ENCODE measurements at regions of chr17 and their contacts with region 1.

Region 1: DNA sequence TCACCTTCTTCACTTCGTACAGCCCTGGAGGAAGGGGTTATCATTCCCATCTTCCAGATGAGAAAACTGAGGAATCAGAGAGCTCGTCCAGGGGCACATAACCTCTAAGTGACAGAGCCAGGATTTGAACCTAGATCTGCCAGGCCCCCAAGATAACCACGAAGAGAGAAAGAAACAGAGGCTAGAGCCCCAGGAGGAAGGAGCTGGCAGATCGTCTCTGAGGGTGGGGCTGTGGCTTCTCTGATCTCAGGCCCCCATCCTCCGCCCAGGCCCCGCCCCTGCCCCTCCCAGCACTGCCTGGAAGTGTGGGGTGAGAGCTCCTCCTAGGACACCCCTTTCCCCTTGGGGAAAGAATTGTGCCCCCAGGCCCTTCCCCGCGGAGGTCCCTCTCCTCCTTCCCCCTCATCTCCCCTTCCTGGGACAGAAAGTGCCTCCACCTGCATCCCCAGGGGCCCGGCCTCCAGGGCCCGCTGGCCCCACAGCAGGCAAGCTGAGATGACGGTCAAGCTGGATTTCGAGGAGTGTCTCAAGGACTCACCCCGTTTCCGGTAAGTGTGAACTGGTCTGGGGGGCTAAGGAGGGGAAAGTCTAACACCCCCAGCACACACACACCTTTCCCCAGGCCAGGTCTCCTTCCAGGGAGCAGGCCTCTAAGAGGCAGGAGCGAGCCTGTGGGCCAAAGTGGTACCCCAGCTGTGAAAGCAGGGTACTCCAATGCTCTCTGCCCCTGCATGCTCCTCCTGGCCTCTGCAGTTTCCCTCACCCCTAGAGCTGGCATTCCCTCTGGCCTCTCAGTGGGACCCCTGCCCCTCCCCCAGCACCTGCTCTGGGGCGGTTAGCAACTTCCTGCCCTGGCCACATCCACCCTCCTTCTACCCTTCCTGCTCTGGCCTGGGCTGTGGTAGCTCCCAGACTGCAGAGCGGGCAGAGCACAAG is at the start of gene ACAP1:
- DNase-seq: peak; percentile 85
- ATAC-seq: peak; percentile 90
- H3K4me3 Mint-ChIP-seq: peak within 1 kb of the TSS; percentile 97
- H3K27ac Mint-ChIP-seq: peak within 1 kb of the TSS; percentile 96
- H3K4me1 Mint-ChIP-seq: peaks cover 43% of the 10 kb centered on the region
- H3K27me3 Mint-ChIP-seq: no peaks in the 10 kb centered on the region
- total RNA-seq, gene ACAP1: 710 to 756 TPM

Region 2: DNA sequence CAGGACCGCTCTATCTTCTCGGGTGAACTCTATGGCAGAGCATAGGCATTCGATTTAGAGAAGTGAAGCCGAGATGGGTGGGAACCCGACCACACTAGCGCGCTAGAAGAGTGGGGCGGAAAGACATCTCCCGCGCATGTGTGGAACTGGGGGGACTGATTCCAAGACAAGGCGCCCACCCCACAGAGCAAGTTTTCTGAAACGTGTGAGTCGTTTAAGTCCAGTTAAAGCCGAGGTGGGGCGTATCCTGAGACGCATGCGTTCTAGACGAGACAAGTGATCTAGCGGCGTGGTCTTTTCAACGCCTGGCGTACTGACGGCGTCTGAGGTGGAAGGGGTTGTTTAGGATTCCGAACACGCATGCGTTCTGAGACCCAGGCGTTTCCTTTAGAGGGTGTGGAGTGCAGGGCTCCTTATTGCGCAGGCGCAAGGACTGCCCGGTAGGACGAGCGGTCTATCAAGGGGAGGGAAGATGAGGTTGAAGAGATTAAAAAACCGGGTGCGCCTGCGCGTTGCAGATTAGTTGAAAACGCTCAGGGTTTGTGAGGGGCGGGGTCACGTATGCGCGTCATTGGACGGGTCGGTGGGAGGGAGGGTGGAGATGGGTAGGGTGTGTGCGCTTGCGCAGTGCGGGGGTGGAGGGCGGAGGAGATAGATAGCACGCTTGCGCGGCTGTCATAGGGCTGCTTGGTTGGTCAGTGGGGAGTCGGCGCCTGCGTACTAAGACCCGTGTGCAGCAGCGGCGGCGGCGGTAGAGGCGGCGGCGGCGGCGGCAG is 29.4 kb before region 1 on chr17 and contains the start of gene EIF5A:
- POLR2A ChIA-PET with region 1: interaction called, 34 read pairs
- DNase-seq: peak; percentile 99
- ATAC-seq: peak; percentile 81
- H3K4me3 Mint-ChIP-seq: peak within 1 kb of the TSS; percentile 89
- H3K27ac Mint-ChIP-seq: peak within 1 kb of the TSS; percentile 98
- H3K4me1 Mint-ChIP-seq: peaks cover 29% of the 10 kb centered on the region
- H3K27me3 Mint-ChIP-seq: no peaks in the 10 kb centered on the region
- total RNA-seq, gene EIF5A: 420 to 451 TPM

Region 3: GRCh38 chr17:7314719-7315569 is 21.6 kb before region 1 on chr17 and contains the start of gene GPS2:
- POLR2A ChIA-PET with region 1: interaction called, 51 read pairs
- DNase-seq: peak; percentile 97
- ATAC-seq: peak; percentile 86
- H3K4me3 Mint-ChIP-seq: peak within 1 kb of the TSS; percentile 93
- H3K27ac Mint-ChIP-seq: peak within 1 kb of the TSS; percentile 95
- H3K4me1 Mint-ChIP-seq: peaks cover 31% of the 10 kb centered on the region
- H3K27me3 Mint-ChIP-seq: no peaks in the 10 kb centered on the region
- total RNA-seq, gene GPS2: 97.1 to 98.5 TPM

Region 4: GRCh38 chr17:7323731-7324437 is 12.6 kb before region 1 on chr17:
- POLR2A ChIA-PET with region 1: interaction called, 33 read pairs
- DNase-seq: peak; percentile 82
- ATAC-seq: peak; percentile 55
- H3K4me3 Mint-ChIP-seq: no peak overlapping the region
- H3K27ac Mint-ChIP-seq: peak overlapping the region; percentile 21
- H3K4me1 Mint-ChIP-seq: peaks cover 13% of the 10 kb centered on the region
- H3K27me3 Mint-ChIP-seq: no peaks in the 10 kb centered on the region

Region 5: GRCh38 chr17:7416323-7416722 is 79.8 kb after region 1 on chr17:
- POLR2A ChIA-PET with region 1: no interaction called
- DNase-seq: no peak
- ATAC-seq: no peak
- H3K4me3 Mint-ChIP-seq: no peak overlapping the region
- H3K27ac Mint-ChIP-seq: no peak overlapping the region
- H3K4me1 Mint-ChIP-seq: no peaks in the 10 kb centered on the region
- H3K27me3 Mint-ChIP-seq: no peaks in the 10 kb centered on the region